Activated naive CD4-positive, alpha-beta T cell treated with anti-CD3 and anti-CD28 coated beads, Interleukin-2, amount 10 ng/mL, durations not matched to agents 7 days and 5 days (primary cell): ENCODE measurements at regions of chr12 and their contacts with region 1.

Region 1: GRCh38 chr12:55073043-55074022 is 52.9 kb upstream of the OR9K2 start:
- DNase-seq: peak; percentile 87
- H3K4me3 Mint-ChIP-seq: no peak overlapping the region
- H3K27ac Mint-ChIP-seq: no peak overlapping the region
- H3K4me1 Mint-ChIP-seq: peaks cover 3% of the 10 kb centered on the region
- H3K27me3 Mint-ChIP-seq: peaks cover 26% of the 10 kb centered on the region

Region 2: GRCh38 chr12:54701940-54702592 is 371.3 kb before region 1 on chr12:
- CTCF ChIA-PET with region 1: interaction called, 38 read pairs
- DNase-seq: no peak
- H3K4me3 Mint-ChIP-seq: no peak overlapping the region
- H3K27ac Mint-ChIP-seq: no peak overlapping the region
- H3K4me1 Mint-ChIP-seq: no peaks in the 10 kb centered on the region
- H3K27me3 Mint-ChIP-seq: peaks cover 12% of the 10 kb centered on the region

Region 3: DNA sequence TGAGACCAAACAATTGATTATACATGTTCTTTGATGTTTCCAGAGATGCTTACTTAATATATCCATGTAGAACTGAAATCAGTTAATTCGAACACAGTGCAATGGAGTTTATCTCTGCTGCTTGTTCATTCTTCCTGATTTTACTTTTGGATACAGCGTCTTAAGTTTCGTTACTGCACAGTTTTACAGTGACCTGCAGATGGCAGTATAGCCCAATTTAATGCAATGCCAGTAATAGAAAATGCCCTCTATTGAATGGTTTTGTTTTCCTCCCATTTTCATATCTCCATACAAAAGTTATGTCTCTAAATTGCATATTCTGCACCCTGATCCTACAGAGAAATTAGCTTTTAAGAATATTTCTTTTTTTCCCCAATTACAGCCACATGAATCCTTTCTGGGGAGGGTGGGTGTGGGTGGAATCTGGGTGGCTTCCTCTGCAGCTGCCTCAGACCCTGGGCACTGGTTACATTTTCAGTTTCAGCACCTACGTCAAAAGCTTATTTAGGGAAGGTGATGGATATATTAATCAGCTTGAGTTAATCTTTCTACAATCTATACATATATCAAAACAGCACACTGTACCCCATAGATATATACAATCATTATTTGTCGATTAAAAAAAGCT is 324.0 kb before region 1 on chr12:
- CTCF ChIA-PET with region 1: interaction called, 129 read pairs
- DNase-seq: peak; percentile 49
- H3K4me3 Mint-ChIP-seq: peak overlapping the region; percentile 39
- H3K27ac Mint-ChIP-seq: no peak overlapping the region
- H3K4me1 Mint-ChIP-seq: peaks cover 30% of the 10 kb centered on the region
- H3K27me3 Mint-ChIP-seq: no peaks in the 10 kb centered on the region

Region 4: DNA sequence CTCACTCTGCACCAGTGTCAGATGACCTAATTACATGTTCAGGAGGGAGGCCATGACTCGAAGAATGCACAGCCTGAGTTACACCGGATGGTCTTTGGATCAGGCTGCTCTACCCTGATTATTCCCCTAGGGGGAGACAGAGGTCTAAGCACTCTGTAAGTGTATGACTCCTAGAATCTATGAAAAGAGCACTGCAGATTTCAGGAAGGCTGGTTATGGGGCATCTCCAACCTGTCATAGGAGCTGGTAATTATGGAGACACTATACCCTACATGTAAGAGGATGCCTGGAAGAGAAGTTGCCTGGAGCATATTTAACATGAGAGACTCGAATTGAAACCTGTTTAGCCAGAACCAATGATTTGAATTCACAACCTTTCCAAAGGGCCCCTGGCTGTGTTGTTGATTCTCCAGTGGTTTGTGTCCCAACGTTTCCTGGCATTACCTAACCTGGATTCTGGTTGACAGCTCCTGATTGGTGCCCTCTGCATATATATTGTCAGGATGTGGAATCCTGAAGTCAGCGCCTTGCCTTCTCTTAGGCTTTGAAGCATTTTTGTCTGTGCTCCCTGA is 219.3 kb before region 1 on chr12 and contains the start of gene MUCL1:
- CTCF ChIA-PET with region 1: interaction called, 47 read pairs
- DNase-seq: peak; percentile 81
- H3K4me3 Mint-ChIP-seq: no peak within 1 kb of the TSS
- H3K27ac Mint-ChIP-seq: no peak within 1 kb of the TSS
- H3K4me1 Mint-ChIP-seq: peaks cover 3% of the 10 kb centered on the region
- H3K27me3 Mint-ChIP-seq: peaks cover 7% of the 10 kb centered on the region

Region 5: GRCh38 chr12:54968181-54968730 is 105.1 kb before region 1 on chr12:
- CTCF ChIA-PET with region 1: interaction called, 19 read pairs
- DNase-seq: no peak
- H3K4me3 Mint-ChIP-seq: peak overlapping the region; percentile 24
- H3K27ac Mint-ChIP-seq: peak overlapping the region; percentile 90
- H3K4me1 Mint-ChIP-seq: peaks cover 62% of the 10 kb centered on the region
- H3K27me3 Mint-ChIP-seq: no peaks in the 10 kb centered on the region

Region 6: DNA sequence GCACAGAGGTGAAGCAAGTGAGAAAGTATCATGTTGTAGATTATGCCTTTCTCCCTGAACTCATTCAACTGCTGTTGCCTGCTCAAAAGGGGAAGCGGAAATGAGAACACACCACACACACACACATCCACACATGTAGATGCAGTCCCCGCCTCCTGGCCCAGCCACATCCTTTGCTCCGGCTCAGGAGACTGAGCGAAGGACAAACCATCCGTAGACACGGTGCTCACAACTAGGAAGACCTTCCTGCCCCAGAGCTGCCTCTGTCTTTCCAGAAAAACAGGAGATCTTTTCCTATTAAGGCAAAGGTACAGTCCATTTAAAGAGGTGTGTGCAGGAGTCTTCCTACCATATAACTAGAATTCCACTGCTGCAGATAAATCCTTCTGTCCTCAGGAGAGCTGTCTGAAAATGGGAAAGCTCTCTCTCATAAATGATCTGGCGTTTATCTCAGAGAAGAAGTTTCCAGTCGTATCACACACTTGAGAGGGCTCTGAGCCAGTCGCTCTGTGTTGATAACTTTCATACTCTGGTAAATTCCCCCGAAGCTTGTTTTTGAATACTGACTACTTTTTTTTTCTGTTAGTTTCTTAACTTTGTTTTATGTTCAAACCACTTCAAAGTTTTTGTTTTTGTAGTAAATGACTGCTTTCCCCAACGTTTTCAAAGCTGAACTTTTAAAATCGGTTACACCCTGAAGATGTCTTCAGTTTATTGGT is 88.5 kb before region 1 on chr12 and contains the start of gene TESPA1:
- CTCF ChIA-PET with region 1: interaction called, 28 read pairs
- DNase-seq: peak; percentile 93
- H3K4me3 Mint-ChIP-seq: peak within 1 kb of the TSS; percentile 82
- H3K27ac Mint-ChIP-seq: peak within 1 kb of the TSS; percentile 93
- H3K4me1 Mint-ChIP-seq: peaks cover 79% of the 10 kb centered on the region
- H3K27me3 Mint-ChIP-seq: no peaks in the 10 kb centered on the region

Region 7: DNA sequence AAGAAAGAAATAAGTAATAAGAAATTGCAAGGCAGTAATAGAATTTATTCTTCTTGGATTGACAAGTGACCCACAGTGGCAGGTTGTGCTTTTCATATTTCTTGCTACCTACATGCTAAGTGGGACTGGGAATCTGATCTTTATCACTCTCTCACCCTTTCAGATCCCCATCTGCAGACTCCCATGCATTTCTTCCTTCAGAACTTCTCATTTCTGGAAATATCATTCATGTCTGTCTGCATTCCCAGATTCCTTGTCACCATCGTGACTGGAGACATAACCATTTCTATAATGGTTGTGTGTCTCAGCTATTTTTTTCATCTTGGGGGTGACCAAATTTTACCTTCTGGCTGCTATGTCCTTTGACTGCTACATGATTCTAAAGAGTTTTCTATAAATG is 323.0 kb after region 1 on chr12:
- CTCF ChIA-PET with region 1: no interaction called
- DNase-seq: no peak
- H3K4me3 Mint-ChIP-seq: no peak overlapping the region
- H3K27ac Mint-ChIP-seq: no peak overlapping the region
- H3K4me1 Mint-ChIP-seq: no peaks in the 10 kb centered on the region
- H3K27me3 Mint-ChIP-seq: peaks cover 4% of the 10 kb centered on the region